Activated naive CD4-positive, alpha-beta T cell treated with anti-CD3 and anti-CD28 coated beads, Interleukin-2, amount 10 ng/mL, durations not matched to agents 7 days and 5 days (primary cell): ENCODE measurements at regions of chr5 and their contacts with region 1.

Region 1: DNA sequence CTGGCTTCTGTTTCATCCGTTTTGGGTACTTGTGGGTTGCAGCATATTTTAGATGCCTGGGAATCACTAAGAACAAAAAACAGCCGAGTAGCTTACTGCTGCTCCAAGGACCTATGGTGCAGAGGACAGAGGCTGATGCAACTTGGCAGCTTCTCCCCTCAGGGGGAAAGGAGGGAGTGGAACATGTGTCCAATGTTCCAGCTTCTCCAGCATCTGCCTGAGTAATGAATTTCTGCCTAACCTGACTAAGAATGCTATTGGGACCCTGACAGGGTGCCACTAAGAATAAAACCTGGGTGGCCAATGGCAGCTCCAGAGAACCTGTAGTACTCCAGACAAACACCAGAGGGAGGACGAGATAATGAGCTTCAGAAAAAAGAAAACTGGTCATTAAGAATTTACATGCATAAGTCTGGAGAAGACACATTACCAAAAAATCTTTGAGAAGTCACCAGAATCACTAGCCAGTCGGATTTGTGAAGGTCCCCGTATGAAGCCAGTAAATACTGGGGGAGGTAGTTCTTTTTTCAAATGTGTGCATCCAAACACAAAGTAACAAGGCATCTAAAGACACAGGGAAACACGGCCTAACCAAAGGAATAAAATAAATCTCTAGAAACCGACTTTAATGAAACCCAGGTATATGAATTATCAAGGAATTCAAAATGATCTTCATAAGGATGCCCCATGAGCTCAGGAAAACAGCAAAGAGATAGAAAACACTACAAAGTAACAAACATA is 293.5 kb downstream of the HINT1 start:
- DNase-seq: peak; percentile 44
- H3K4me3 Mint-ChIP-seq: no peak overlapping the region
- H3K27ac Mint-ChIP-seq: no peak overlapping the region
- H3K4me1 Mint-ChIP-seq: no peaks in the 10 kb centered on the region
- H3K27me3 Mint-ChIP-seq: peaks cover 4% of the 10 kb centered on the region

Region 2: GRCh38 chr5:130795037-130795436 is 76.5 kb before region 1 on chr5:
- CTCF ChIA-PET with region 1: no interaction called
- DNase-seq: no peak
- H3K4me3 Mint-ChIP-seq: no peak overlapping the region
- H3K27ac Mint-ChIP-seq: no peak overlapping the region
- H3K4me1 Mint-ChIP-seq: no peaks in the 10 kb centered on the region
- H3K27me3 Mint-ChIP-seq: no peaks in the 10 kb centered on the region

Region 3: DNA sequence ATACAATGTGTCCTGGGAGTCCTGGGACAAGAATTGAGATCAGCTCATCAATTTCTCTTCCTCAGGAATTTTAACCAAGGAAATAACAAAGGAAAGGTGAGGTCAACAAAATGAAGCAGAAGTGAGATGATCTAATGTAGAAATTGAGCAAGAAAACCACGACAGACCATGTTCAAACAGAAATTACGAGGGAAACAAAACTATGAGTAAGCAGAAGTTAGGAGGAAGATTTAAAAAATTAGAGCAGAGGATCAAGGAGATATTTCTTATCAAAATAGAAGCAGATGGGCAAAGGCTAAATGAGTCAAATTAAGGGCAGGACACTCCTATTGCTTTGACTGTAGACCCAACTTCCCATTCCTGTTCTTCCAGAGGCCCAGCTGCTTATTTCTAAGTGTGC is 196.1 kb after region 1 on chr5:
- CTCF ChIA-PET with region 1: interaction called, 12 read pairs
- DNase-seq: no peak
- H3K4me3 Mint-ChIP-seq: no peak overlapping the region
- H3K27ac Mint-ChIP-seq: peak overlapping the region; percentile 70
- H3K4me1 Mint-ChIP-seq: peaks cover 65% of the 10 kb centered on the region
- H3K27me3 Mint-ChIP-seq: no peaks in the 10 kb centered on the region

Region 4: GRCh38 chr5:131109540-131110255 is 238.2 kb after region 1 on chr5:
- CTCF ChIA-PET with region 1: interaction called, 33 read pairs
- DNase-seq: peak; percentile 36
- H3K4me3 Mint-ChIP-seq: no peak overlapping the region
- H3K27ac Mint-ChIP-seq: no peak overlapping the region
- H3K4me1 Mint-ChIP-seq: peaks cover 5% of the 10 kb centered on the region
- H3K27me3 Mint-ChIP-seq: peaks cover 3% of the 10 kb centered on the region

Region 5: DNA sequence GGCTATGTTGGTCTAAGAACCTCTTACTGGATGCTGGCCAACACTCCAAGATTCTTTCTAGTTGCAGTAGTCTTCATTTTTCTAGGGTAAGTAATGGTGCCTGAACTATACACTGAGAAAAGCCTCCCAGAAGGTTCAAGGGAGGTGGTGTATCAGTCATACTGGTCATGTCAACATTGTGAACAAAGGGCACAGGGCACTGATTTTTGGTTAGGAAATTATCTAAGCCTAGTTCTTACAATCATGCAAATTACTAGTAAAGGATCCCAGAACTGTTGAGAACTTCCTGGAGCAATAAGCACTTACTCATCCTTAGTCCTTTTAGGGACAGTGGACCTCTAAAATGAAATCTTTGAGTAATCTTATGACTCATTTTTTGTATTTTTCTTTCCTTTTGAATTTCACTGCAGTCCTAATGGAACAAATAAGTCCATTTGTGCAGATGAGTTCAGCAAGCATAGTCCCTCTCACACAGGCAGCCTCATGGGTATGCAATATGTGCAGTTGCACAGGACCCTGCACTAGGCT is 371.3 kb after region 1 on chr5:
- CTCF ChIA-PET with region 1: no interaction called
- DNase-seq: no peak
- H3K4me3 Mint-ChIP-seq: no peak overlapping the region
- H3K27ac Mint-ChIP-seq: no peak overlapping the region
- H3K4me1 Mint-ChIP-seq: peaks cover 2% of the 10 kb centered on the region
- H3K27me3 Mint-ChIP-seq: no peaks in the 10 kb centered on the region